ENCODE measurements at regions of chr6 and their contacts with region 1.

Region 1: GRCh38 chr6:33430991-33431879 is 11.4 kb downstream of the SYNGAP1 start:
- DNase-seq: peak; percentile 78 to 96 (median 89)
- ATAC-seq: peak; percentile 59 to 72
- H3K4me3 Mint-ChIP-seq: peak overlapping the region; percentile 85 to 94 (median 92)
- H3K27ac Mint-ChIP-seq: peak overlapping the region; percentile 88 to 99 (median 96)
- H3K4me1 Mint-ChIP-seq: peaks cover 55 to 74% (median 64%) of the 10 kb centered on the region in 4 donors
- H3K27me3 Mint-ChIP-seq: no peaks in the 10 kb centered on the region

Region 2: GRCh38 chr6:33276864-33277662 is 154.2 kb before region 1 on chr6 and contains the start of gene B3GALT4:
- POLR2A ChIA-PET with region 1: interaction called, 13 read pairs
- DNase-seq: peak; percentile 37 to 78 (median 64)
- ATAC-seq: peak; percentile 72 to 76
- H3K4me3 Mint-ChIP-seq: peak within 1 kb of the TSS; percentile 88 to 96 (median 92)
- H3K27ac Mint-ChIP-seq: peak within 1 kb of the TSS; percentile 72 to 97 (median 94)
- H3K4me1 Mint-ChIP-seq: peaks cover 34 to 80% (median 77%) of the 10 kb centered on the region in 4 donors
- H3K27me3 Mint-ChIP-seq: no peaks in the 10 kb centered on the region
- polyA plus RNA-seq, gene B3GALT4: 14.5 to 20.4 (median 18.7) TPM

Region 3: GRCh38 chr6:33317669-33318425 is 113.4 kb before region 1 on chr6 and contains the start of gene ZBTB22:
- POLR2A ChIA-PET with region 1: interaction called, 11 read pairs
- DNase-seq: peak; percentile 89 to 98 (median 94)
- ATAC-seq: peak; percentile 59 to 62
- H3K4me3 Mint-ChIP-seq: peak within 1 kb of the TSS in 9 of 10 donors; percentile 96 to 100 (median 99)
- H3K27ac Mint-ChIP-seq: peak within 1 kb of the TSS; percentile 95 to 100 (median 98)
- H3K4me1 Mint-ChIP-seq: peaks cover 36 to 87% (median 79%) of the 10 kb centered on the region in 4 donors
- H3K27me3 Mint-ChIP-seq: no peaks in the 10 kb centered on the region
- polyA plus RNA-seq, gene ZBTB22: 10.4 to 13.4 (median 10.7) TPM

Region 4: DNA sequence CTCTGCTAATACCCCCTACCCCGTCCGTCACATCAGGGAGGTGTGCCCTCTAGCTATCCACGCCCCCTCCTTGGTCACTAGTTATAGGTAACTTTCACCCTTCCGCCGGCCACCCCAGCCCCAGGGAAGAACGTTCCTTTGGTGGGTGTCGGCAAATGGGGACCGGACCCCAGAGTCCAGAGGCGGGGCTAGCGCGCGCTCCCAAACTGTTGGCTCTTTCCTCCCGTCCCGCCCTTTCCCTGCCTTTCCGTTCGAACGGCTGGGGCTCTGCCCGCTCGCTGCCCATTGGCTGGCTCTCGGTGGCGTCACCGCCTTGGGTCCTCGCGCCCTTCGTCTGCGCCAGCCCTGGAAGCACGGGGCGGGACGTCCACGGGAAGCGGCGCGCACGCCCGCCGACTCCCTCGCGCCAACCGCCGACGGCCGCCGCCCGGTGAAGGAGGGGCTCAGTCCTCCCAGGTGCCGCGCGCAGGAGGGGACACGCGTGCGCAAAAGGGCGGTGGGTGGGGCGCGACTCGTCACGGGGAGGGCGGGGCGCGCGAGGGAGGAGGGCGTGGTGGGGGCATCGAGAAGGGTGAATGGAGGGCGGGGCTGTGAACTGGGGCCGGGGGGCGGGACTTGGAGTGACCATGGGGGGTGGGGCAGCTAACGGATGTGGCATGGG is 21.1 kb before region 1 on chr6:
- POLR2A ChIA-PET with region 1: interaction called, 49 read pairs
- DNase-seq: peak; percentile 94 to 99 (median 96)
- ATAC-seq: peak; percentile 72 to 83
- H3K4me3 Mint-ChIP-seq: peak overlapping the region; percentile 74 to 96 (median 90)
- H3K27ac Mint-ChIP-seq: peak overlapping the region; percentile 63 to 99 (median 98)
- H3K4me1 Mint-ChIP-seq: peaks cover 20 to 53% (median 44%) of the 10 kb centered on the region in 4 donors
- H3K27me3 Mint-ChIP-seq: no peaks in the 10 kb centered on the region

Region 5: GRCh38 chr6:33445119-33445603 is 13.9 kb after region 1 on chr6:
- POLR2A ChIA-PET with region 1: interaction called, 13 read pairs
- DNase-seq: no peak
- ATAC-seq: no peak
- H3K4me3 Mint-ChIP-seq: no peak overlapping the region
- H3K27ac Mint-ChIP-seq: peak overlapping the region in 6 of 10 donors; percentile 9 to 79 (median 42)
- H3K4me1 Mint-ChIP-seq: peaks cover 8 to 44% (median 20%) of the 10 kb centered on the region in 4 donors
- H3K27me3 Mint-ChIP-seq: no peaks in the 10 kb centered on the region

Region 6: DNA sequence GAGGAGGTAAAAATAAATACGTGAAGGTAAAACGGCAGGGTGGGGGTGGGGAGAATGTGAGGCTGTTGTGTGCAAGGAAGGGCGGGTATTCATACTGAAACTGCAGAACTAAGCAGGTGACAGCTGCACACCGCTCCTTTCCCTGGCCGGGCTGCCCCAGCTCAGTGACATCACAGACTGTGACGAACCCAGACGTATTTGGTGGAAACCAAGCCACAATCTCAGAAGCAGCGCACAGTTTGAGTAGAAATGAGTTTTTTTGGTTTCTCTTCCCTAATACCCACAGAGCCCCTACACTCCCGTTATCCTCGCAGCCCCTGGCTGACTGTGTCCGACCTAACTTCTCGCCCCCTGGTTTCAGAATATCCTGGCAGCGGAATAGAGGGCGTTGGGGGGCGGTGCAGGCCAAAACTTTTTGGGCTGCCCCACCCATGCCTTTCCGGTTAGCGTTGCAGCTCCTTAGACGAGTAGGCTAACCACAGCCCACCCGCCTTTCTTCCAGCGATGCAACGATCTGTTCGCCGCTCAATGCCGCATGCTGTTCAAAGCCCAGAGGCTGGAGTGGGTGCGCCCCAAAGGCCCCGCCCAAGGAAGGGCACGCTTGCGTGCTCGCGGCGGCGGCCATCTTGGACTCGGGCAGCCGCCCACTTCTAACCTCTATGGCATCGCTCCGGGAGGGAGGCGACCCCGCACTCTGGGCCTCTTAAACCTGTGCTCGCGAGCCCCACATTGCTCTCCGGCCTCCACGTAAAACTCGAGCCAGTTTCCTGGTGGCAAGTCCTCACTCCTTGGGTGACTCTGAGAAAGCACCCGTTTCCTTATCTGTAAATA is 139.8 kb after region 1 on chr6:
- POLR2A ChIA-PET with region 1: interaction called, 26 read pairs
- DNase-seq: peak; percentile 82 to 97 (median 96)
- ATAC-seq: peak; percentile 89 to 91
- H3K4me3 Mint-ChIP-seq: peak overlapping the region; percentile 84 to 97 (median 96)
- H3K27ac Mint-ChIP-seq: peak overlapping the region; percentile 99 to 100 (median 100)
- H3K4me1 Mint-ChIP-seq: peaks cover 16 to 35% (median 29%) of the 10 kb centered on the region in 4 donors
- H3K27me3 Mint-ChIP-seq: no peaks in the 10 kb centered on the region

Region 7: GRCh38 chr6:33589731-33590530 is 158.7 kb after region 1 on chr6:
- POLR2A ChIA-PET with region 1: no interaction called
- DNase-seq: peak in 8 of 10 donors; percentile 30 to 73 (median 44)
- ATAC-seq: no peak
- H3K4me3 Mint-ChIP-seq: no peak overlapping the region
- H3K27ac Mint-ChIP-seq: peak overlapping the region in 4 of 10 donors; percentile 29 to 53 (median 37)
- H3K4me1 Mint-ChIP-seq: peaks cover 16 to 48% (median 40%) of the 10 kb centered on the region in 4 donors
- H3K27me3 Mint-ChIP-seq: no peaks in the 10 kb centered on the region

Measured in naive thymus-derived CD8-positive, alpha-beta T cell (primary cell).